ENCODE measurements at regions of chr12 and their contacts with region 1.

Region 1: GRCh38 chr12:124590447-124590846 is 23.0 kb upstream of the NCOR2 start:
- DNase-seq: no peak
- H3K4me3 ChIP-seq: no peak overlapping the region
- H3K27ac ChIP-seq: no peak overlapping the region
- H3K4me1 ChIP-seq: no peaks in the 10 kb centered on the region
- H3K27me3 ChIP-seq: no peaks in the 10 kb centered on the region
- CTCF ChIP-seq: no peak
- POLR2A ChIP-seq: no peak

Region 2: GRCh38 chr12:124545508-124546418 is 44.7 kb before region 1 on chr12:
- intact Hi-C with region 1: loop called (anchors 1 kb)
- DNase-seq: no peak
- H3K4me3 ChIP-seq: peak overlapping the region in 1 of 3 donors; percentile 46
- H3K27ac ChIP-seq: peak overlapping the region; percentile 12 to 76
- H3K4me1 ChIP-seq: peaks cover 30 to 40% of the 10 kb centered on the region in 2 donors
- H3K27me3 ChIP-seq: no peaks in the 10 kb centered on the region
- CTCF ChIP-seq: no peak
- POLR2A ChIP-seq: no peak

Measured in breast epithelium (tissue), 4 donors.